ENCODE measurements at regions of chr5 and their contacts with region 1.

Region 1: DNA sequence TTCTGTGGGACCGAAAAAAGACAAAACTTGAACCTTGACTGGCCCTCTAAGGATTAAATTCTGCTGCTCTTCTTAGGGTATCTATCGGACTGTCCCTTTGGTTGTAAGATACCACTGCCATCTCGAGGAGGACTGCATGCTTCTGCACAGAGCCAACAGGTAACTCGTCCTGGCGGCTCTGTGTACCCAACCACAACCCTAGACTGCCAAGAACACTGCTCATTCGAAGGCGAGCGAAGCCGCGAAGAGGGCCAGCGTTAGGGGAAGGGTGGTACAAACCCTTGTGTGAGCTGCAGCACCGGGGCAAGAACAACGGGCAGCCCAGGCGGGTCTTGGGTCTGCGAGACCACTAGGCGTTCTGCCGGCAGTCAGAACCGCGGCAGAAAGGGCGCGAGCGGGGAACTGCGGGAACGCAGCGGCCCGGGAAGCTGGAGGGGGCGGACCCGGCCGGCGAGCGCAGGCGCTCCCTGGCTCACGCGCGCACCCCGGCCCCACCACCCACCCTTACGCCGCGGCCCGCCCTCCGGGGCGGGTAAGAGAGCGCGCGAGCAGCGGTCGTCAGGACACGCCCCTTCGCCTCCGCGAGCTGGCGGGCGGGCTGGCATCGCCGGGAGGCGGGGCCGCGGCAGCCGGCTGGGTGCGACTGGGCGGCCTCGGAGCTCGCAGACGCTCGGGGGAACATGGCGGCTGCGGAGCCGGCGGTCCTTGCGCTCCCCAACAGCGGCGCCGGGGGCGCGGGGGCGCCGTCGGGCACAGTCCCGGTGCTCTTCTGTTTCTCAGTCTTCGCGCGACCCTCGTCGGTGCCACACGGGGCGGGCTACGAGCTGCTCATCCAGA is at the start of gene ISOC1:
- H3K4me3 Mint-ChIP-seq: peak within 1 kb of the TSS; percentile 87
- H3K27ac Mint-ChIP-seq: peak within 1 kb of the TSS; percentile 82
- H3K4me1 Mint-ChIP-seq: peaks cover 14% of the 10 kb centered on the region
- H3K27me3 Mint-ChIP-seq: peaks cover 23% of the 10 kb centered on the region

Region 2: DNA sequence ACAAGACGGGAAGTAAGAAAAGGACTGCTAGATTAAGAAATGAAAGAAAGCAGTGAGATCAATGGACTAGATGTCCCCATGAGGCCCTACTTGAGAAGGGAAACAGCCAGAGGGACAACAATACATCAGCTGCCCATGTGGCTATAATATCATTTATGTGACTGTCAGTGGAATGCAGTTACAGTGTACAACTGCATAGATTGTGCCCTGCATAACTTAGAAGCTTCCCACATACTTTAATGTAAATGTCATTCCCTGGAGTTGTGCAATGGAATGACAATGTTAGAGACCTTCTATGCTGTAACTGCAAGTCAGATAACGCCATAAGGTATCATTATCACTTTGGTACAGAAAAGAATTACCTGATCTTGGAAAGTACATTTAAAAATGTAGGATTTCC is 623.7 kb before region 1 on chr5:
- intact Hi-C with region 1: no loop called
- H3K4me3 Mint-ChIP-seq: no peak overlapping the region
- H3K27ac Mint-ChIP-seq: no peak overlapping the region
- H3K4me1 Mint-ChIP-seq: no peaks in the 10 kb centered on the region
- H3K27me3 Mint-ChIP-seq: no peaks in the 10 kb centered on the region

Region 3: GRCh38 chr5:128920345-128921215 is 173.7 kb before region 1 on chr5:
- intact Hi-C with region 1: loop called (anchors 10 kb)
- H3K4me3 Mint-ChIP-seq: no peak overlapping the region
- H3K27ac Mint-ChIP-seq: no peak overlapping the region
- H3K4me1 Mint-ChIP-seq: no peaks in the 10 kb centered on the region
- H3K27me3 Mint-ChIP-seq: no peaks in the 10 kb centered on the region

Region 4: GRCh38 chr5:129113871-129114270 is 19.6 kb after region 1 on chr5:
- intact Hi-C with region 1: no loop called
- H3K4me3 Mint-ChIP-seq: no peak overlapping the region
- H3K27ac Mint-ChIP-seq: no peak overlapping the region
- H3K4me1 Mint-ChIP-seq: peaks cover 6% of the 10 kb centered on the region
- H3K27me3 Mint-ChIP-seq: no peaks in the 10 kb centered on the region

Measured in dendritic cell treated with granulocyte-macrophage colony-stimulating factor and Interleukin-4, amounts not matched to agents 40 ng/mL and 50 ng/mL, for 4 days (primary cell).